Right ventricle myocardium inferior (tissue), 1 donor: ENCODE measurements at regions of chr1 and their contacts with region 1.

Region 1: GRCh38 chr1:34113887-34114286 is 51.1 kb downstream of the CSMD2 start:
- DNase-seq: no peak
- ATAC-seq: no peak

Region 2: DNA sequence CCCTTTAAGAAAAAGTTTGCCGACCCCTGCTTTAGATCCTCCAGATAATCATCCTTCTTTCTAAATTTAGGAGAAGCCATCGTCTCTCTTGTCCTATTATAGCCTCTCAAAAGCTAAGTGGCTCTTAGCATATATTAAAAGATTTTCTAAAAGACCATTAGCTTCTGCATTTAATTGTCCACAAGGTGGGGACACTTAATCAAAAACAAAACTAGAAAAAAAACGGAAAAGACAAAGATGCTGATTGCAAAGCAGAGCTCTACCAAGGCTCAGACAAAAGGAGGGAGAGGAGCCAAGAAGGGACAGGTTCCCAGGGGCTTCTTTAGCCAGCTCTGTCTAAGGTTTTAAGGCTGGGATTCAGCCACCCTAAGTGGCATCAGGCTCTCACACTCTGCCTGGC is 378.3 kb before region 1 on chr1:
- intact Hi-C with region 1: loop called (anchors 2 kb)
- DNase-seq: no peak
- ATAC-seq: no peak

Region 3: GRCh38 chr1:33875862-33876261 is 238.0 kb before region 1 on chr1:
- intact Hi-C with region 1: loop called (anchors 2 kb)
- DNase-seq: no peak
- ATAC-seq: no peak

Region 4: DNA sequence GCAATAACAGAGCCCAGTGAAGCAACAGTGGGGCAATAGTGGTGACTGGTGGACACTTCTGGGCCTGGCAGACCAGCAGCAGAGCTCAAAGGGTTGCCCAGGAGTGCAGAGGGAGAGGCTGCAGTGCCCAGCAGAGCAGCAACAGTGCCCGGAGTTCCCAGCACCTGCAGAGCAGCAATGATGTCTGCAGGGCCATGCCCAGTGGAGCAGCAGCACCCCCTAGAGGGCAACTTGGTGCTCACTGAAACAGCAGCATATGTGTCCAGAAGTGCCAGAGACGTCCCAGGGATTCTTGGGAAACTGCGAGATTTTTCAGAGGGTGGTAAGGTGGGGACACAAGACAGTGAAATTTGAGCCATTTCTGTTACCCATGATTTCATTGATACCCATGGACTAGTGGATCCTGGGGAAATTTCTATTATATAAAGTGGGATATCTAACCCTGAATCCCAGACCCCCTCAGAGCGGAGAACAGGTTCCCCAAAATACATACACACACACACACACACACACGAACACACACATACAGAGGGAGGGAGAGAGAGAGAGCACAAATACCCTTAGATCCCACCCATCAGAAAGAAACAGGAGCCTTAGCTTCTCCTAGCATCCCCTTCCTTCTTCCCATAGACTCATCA is 484.1 kb after region 1 on chr1:
- intact Hi-C with region 1: loop called (anchors 5 kb)
- DNase-seq: no peak
- ATAC-seq: peak; percentile 44

Region 5: GRCh38 chr1:34742667-34743270 is 628.9 kb after region 1 on chr1:
- intact Hi-C with region 1: loop called (anchors 2 kb)
- DNase-seq: peak; percentile 81
- ATAC-seq: peak; percentile 83